ENCODE measurements at regions of chr2 and their contacts with region 1.

Region 1: DNA sequence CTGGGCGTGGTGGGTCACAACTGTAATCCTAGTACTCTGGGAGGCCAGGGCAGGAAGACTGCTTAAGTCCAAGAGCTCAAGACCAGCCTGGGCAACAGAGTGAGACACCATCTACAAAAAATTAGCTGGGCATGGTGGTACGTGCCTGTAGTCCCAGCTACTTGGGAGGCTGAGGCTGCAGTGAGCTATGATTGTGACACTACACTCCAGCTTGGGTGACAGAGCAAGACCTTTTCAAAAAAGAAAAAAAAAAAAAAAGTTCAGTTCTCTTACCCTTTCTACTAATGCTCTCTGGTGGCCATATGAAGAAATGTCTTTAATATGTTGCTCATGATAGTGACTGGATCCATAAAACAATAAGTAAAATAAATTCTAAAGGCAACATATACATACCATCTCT is 14.9 kb downstream of the TYW5 start:
- DNase-seq: no peak
- ATAC-seq: peak; percentile 61 to 78 (median 72)
- H3K4me3 ChIP-seq: no peak overlapping the region
- H3K27ac ChIP-seq: no peak overlapping the region
- H3K4me1 ChIP-seq: peaks cover 8% of the 10 kb centered on the region
- H3K27me3 ChIP-seq: no peaks in the 10 kb centered on the region
- CTCF ChIP-seq: peak; percentile 43

Region 2: GRCh38 chr2:199704358-199705238 is 235.8 kb before region 1 on chr2:
- intact Hi-C with region 1: loop called (anchors 5 to 10 kb)
- DNase-seq: no peak
- ATAC-seq: peak; percentile 55 to 91 (median 73)
- H3K4me3 ChIP-seq: no peak overlapping the region
- H3K27ac ChIP-seq: no peak overlapping the region
- H3K4me1 ChIP-seq: no peaks in the 10 kb centered on the region
- H3K27me3 ChIP-seq: no peaks in the 10 kb centered on the region
- CTCF ChIP-seq: peak; percentile 60

Region 3: DNA sequence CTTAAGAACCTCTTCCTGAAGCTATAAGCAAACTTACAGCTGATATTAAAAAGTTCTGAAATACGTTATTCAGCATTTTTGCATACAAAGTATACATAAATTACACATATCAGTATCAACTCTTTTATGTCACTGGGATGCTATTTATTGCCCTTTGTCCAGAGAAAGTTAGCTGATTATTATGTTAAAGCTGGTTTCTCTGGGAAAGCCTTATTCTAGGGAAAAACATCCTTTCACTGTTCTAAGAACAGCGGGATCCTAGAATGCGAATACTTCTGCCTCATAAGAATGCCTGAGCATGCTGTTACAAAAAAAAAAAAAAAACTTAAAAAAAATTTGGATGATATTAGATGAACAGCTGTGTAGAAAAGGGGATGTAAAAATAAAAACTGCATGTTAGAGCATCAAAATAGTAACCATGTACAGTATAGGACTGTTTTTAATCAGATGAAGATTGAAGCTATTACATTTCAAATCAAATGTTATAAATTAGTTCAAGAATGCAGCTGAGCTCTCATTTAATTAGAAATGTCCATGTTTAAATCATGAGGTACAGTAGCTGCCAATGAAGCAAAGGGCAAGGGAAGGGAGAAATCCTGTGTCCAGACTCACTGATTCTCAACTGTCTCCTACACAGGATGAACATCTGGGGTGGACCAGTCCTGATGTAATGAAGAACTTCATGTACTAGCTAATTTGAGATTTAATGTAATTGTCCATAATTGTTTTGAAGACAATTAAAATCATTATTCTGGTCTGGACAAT is 97.6 kb before region 1 on chr2:
- intact Hi-C with region 1: no loop called
- DNase-seq: no peak
- ATAC-seq: no peak
- H3K4me3 ChIP-seq: no peak overlapping the region
- H3K27ac ChIP-seq: no peak overlapping the region
- H3K4me1 ChIP-seq: no peaks in the 10 kb centered on the region
- H3K27me3 ChIP-seq: no peaks in the 10 kb centered on the region
- CTCF ChIP-seq: no peak